ENCODE measurements at regions of chr19 and their contacts with region 1.

Region 1: GRCh38 chr19:3479177-3479833 is 1.0 kb downstream of the SMIM24 start:
- ATAC-seq: peak in 6 of 8 experiments; percentile 4 to 43 (median 20)
- H3K4me3 ChIP-seq: no peak overlapping the region
- H3K27ac ChIP-seq: no peak overlapping the region
- H3K4me1 ChIP-seq: peaks cover 6 to 9% of the 10 kb centered on the region in 2 donors

Region 2: DNA sequence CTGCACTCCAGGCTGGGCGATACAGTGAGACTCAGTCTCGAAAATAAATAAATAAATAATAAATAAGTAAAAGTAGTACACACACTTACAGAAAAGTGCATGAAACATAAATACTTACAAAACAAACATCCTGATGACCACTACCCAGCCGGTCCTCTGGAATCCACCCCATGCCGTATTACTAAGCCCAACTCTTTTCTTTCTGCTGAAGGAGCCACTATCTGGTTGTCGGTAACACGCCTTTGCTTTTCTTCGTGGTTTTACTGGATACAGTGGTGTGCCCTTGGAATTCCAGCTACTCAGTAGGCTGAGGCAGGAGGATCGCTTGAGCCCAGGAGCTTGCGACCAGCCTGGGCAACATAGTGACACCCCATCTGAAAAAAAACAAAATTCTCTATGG is 215.4 kb before region 1 on chr19:
- in situ Hi-C with region 1: no loop called
- ATAC-seq: no peak
- H3K4me3 ChIP-seq: no peak overlapping the region
- H3K27ac ChIP-seq: no peak overlapping the region
- H3K4me1 ChIP-seq: peaks cover 8 to 11% of the 10 kb centered on the region in 2 donors

Region 3: DNA sequence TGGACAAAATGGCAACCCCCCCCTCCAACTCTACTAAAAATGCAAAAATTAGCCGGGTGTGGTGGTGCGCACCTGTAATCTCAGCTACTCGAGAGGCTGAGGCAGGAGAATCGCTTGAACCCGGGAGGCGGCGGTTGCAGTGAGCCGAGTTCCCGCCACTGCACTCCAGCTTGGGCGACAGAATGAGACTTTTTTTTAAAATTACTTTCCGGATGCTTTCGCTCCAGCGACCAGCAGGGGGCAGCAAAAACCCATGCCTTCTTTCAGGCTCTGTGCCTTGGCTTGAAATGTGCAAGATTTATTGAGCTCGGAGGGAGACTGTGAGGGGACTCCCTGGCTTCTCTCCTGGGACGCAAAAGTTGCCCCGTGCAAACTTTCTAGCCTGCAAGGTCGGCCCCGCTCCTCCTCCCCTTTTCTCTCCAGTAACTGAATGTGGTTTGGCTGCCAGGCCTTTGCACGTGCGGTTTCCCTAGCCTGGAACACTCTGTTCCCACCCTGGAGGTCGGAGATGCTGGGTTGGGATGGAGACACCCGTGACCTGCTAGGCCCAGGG is 174.4 kb before region 1 on chr19:
- in situ Hi-C with region 1: loop called in 1 of 9 experiments (anchors 25 kb)
- ATAC-seq: peak; percentile 53 to 73 (median 68)
- H3K4me3 ChIP-seq: no peak overlapping the region
- H3K27ac ChIP-seq: no peak overlapping the region
- H3K4me1 ChIP-seq: no peaks in the 10 kb centered on the region

Region 4: GRCh38 chr19:3324321-3324856 is 154.9 kb before region 1 on chr19:
- in situ Hi-C with region 1: loop called in 8 of 9 experiments (anchors 5 to 25 kb)
- ATAC-seq: peak in 3 of 8 experiments; percentile 28 to 48 (median 41)
- H3K4me3 ChIP-seq: no peak overlapping the region
- H3K27ac ChIP-seq: no peak overlapping the region
- H3K4me1 ChIP-seq: no peaks in the 10 kb centered on the region

Region 5: GRCh38 chr19:3343619-3344502 is 135.4 kb before region 1 on chr19:
- in situ Hi-C with region 1: loop called in 3 of 9 experiments (anchors 25 kb)
- ATAC-seq: peak in 3 of 8 experiments; percentile 90 to 97 (median 96)
- H3K4me3 ChIP-seq: no peak overlapping the region
- H3K27ac ChIP-seq: no peak overlapping the region
- H3K4me1 ChIP-seq: no peaks in the 10 kb centered on the region

Region 6: DNA sequence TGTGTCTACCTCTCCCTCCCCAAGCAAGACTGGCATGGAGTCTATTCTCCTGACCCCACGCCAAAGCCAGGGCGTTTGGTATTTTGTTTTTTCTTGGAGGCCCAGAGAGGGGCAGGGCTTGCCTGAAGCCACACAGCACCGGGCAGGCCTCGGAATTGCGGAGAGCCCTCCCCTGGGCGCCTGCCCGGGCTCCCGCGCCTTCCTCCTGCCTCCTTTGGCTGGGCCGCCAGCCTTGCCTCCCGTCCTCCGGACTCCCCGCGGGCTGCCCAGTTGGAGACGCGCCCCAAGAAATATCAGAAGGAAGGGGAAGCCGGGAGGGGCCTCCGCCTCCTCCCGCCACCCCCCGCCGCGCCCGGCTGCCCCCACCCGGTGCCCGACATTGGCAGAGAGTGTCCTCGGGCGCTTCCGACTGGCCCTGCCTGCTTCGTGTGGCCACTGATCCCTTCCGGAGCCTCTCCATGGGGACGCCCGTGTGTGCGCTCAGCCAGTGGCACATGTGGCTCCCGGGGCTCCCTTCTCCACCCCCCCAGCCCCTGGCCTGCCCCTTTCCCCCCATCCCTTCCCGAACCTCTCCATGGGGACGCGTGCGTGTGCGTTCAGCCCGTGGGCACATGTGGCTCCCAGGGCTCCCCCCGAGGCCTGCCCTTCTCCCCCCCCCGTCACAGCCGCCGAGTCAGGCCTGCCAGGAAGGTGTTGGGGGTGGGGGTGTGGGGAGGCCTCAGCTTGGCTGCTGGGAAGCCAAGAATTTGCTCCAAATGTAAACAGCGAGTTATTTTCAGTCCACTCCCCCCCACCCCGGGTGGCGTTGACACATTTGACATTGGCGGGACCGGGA is 75.6 kb before region 1 on chr19:
- in situ Hi-C with region 1: no loop called
- ATAC-seq: peak; percentile 58 to 83 (median 77)
- H3K4me3 ChIP-seq: no peak overlapping the region
- H3K27ac ChIP-seq: no peak overlapping the region
- H3K4me1 ChIP-seq: peaks cover under 1 to 9% of the 10 kb centered on the region in 2 donors

Measured in motor neuron (in vitro differentiated cells).